Dendritic cell treated with granulocyte-macrophage colony-stimulating factor and Interleukin-4, amounts not matched to agents 40 ng/mL and 50 ng/mL, for 4 days (primary cell): ENCODE measurements at regions of chr10 and their contacts with region 1.

Region 1: GRCh38 chr10:11782793-11783557 is 40.2 kb upstream of the PROSER2 start:
- H3K4me3 Mint-ChIP-seq: no peak overlapping the region
- H3K27ac Mint-ChIP-seq: no peak overlapping the region
- H3K4me1 Mint-ChIP-seq: peaks cover under 1% of the 10 kb centered on the region
- H3K27me3 Mint-ChIP-seq: peaks cover 4% of the 10 kb centered on the region

Region 2: DNA sequence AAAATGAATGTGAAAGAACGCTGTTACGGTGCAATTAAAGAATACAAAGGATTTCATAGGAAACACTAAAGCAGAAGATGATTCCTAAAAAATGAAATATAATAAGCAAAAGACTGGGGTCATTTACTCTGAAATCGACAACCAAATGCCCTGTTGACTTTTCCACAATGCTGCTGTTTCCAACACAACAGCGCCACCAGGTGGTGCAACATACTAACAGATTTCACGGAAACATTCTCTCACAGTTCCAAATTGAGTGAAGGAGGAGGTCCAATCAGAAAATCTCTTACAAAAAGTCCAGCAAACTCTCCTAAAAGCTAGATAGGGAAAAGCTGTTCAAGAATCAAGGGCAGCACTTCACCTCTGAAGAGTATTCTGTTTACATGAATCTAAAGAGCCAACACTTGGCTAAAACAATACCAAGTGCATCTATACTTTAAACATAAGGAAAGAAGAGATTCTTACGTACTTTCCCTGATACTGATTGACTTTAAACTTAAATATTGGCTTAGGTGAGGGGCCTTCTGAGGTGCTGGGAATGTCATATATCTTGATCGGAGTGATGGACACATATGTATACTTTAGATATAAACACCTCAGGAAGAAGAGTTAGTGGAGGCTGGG is 203.7 kb after region 1 on chr10:
- intact Hi-C with region 1: loop called (anchors 1 kb)
- H3K4me3 Mint-ChIP-seq: no peak overlapping the region
- H3K27ac Mint-ChIP-seq: no peak overlapping the region
- H3K4me1 Mint-ChIP-seq: no peaks in the 10 kb centered on the region
- H3K27me3 Mint-ChIP-seq: no peaks in the 10 kb centered on the region